MCF 10A (cell line): ENCODE measurements at regions of chr1 and their contacts with region 1.

Region 1: DNA sequence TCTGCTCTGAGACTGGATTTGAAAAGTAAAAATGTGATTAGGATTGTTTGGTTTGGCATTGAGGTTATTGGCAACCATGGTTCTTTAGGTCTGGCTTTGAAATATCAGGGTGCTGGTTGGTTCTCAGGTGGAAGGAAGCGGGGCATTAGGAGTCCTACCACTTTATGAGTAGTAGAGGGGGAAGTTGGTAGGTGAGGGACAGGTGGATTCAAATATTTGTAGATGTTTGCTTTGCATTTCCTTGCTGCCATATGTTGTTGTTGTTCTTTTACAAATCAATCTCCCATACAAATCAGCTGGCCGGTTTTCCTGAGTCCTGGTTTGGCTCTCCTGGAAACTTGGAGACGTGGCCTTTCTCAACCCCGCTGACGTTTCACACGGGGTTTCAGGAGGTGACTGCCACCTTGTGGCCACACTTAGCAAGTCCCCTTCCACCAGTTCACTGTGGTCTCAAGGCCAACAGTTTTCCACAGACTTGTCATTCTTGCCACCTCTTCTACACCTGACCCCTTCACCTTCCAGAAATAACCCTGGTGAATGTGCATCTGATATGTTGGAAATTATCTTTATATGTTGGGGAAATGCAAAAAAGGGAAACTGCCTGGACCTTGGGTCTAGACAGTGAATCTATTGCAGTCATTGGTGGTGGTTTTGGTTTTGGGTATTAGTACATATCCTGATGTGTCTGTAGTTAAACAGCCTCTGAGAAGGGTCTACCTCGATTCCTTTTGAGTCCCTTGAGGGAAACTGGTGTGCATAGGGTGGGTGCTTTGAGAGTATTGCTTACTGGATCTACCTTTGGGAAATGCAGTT is 127.0 kb upstream of the KIAA0040 start:
- DNase-seq: peak; percentile 85
- H3K4me3 Mint-ChIP-seq: no peak overlapping the region
- H3K27ac Mint-ChIP-seq: no peak overlapping the region
- H3K4me1 Mint-ChIP-seq: peaks cover 5% of the 10 kb centered on the region
- H3K27me3 Mint-ChIP-seq: no peaks in the 10 kb centered on the region
- CTCF ChIP-seq: peak; percentile 94

Region 2: GRCh38 chr1:175146529-175147213 is 173.0 kb before region 1 on chr1:
- CTCF ChIA-PET with region 1: interaction called, 723 read pairs
- POLR2A ChIA-PET with region 1: interaction called, 9 read pairs
- intact Hi-C with region 1: no loop called
- DNase-seq: peak; percentile 74
- H3K4me3 Mint-ChIP-seq: no peak overlapping the region
- H3K27ac Mint-ChIP-seq: no peak overlapping the region
- H3K4me1 Mint-ChIP-seq: peaks cover 12% of the 10 kb centered on the region
- H3K27me3 Mint-ChIP-seq: peaks cover 15% of the 10 kb centered on the region
- CTCF ChIP-seq: peak; percentile 88

Region 3: GRCh38 chr1:175174309-175175165 is 145.1 kb before region 1 on chr1:
- CTCF ChIA-PET with region 1: interaction called, 18 read pairs
- POLR2A ChIA-PET with region 1: interaction called, 3 read pairs
- intact Hi-C with region 1: no loop called
- DNase-seq: no peak
- H3K4me3 Mint-ChIP-seq: no peak overlapping the region
- H3K27ac Mint-ChIP-seq: peak overlapping the region; percentile 39
- H3K4me1 Mint-ChIP-seq: peaks cover 24% of the 10 kb centered on the region
- H3K27me3 Mint-ChIP-seq: no peaks in the 10 kb centered on the region
- CTCF ChIP-seq: no peak

Region 4: DNA sequence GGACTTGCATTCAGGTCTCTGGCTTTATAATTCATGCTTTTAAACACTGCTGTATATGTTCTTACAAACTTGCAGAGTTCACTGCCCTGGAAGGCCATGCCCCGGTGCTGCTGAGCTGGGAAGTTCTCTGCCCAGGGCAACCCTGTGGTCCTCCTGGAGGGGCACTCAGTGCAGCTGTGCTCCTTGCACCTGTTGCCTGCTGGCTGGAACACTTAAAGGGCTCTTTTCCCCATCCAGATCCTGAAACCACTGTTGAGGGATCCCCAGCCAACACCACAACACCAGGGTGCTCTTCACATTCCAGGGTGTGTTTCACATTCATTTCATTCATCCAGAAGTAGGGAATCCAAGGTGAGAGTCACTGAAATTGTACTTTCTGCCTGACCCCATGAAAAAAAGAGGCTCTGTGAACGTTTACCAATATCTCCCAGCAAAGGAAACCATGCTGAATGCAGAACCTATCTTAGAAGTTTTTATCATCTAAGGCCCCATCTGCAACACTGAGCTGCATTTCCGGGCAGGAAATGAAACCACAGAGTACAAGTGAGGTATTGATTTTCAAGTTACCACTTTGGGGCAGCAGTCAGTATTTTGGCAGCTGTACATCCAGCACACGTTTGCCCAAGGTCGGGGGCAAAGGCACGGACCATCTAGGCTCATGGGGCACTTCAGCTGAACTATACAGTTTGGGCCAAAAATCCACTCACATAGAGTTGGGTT is 110.7 kb before region 1 on chr1:
- CTCF ChIA-PET with region 1: interaction called, 10 read pairs
- POLR2A ChIA-PET with region 1: no interaction called
- intact Hi-C with region 1: no loop called
- DNase-seq: no peak
- H3K4me3 Mint-ChIP-seq: no peak overlapping the region
- H3K27ac Mint-ChIP-seq: no peak overlapping the region
- H3K4me1 Mint-ChIP-seq: peaks cover 14% of the 10 kb centered on the region
- H3K27me3 Mint-ChIP-seq: no peaks in the 10 kb centered on the region
- CTCF ChIP-seq: no peak

Region 5: GRCh38 chr1:175252561-175252960 is 67.1 kb before region 1 on chr1:
- CTCF ChIA-PET with region 1: interaction called, 11 read pairs
- POLR2A ChIA-PET with region 1: no interaction called
- intact Hi-C with region 1: no loop called
- DNase-seq: no peak
- H3K4me3 Mint-ChIP-seq: no peak overlapping the region
- H3K27ac Mint-ChIP-seq: no peak overlapping the region
- H3K4me1 Mint-ChIP-seq: no peaks in the 10 kb centered on the region
- H3K27me3 Mint-ChIP-seq: no peaks in the 10 kb centered on the region
- CTCF ChIP-seq: no peak

Region 6: GRCh38 chr1:175331891-175332290 is 12.3 kb after region 1 on chr1:
- CTCF ChIA-PET with region 1: interaction called, 54 read pairs
- POLR2A ChIA-PET with region 1: interaction called, 4 read pairs
- intact Hi-C with region 1: no loop called
- DNase-seq: no peak
- H3K4me3 Mint-ChIP-seq: no peak overlapping the region
- H3K27ac Mint-ChIP-seq: no peak overlapping the region
- H3K4me1 Mint-ChIP-seq: no peaks in the 10 kb centered on the region
- H3K27me3 Mint-ChIP-seq: peaks cover 34% of the 10 kb centered on the region
- CTCF ChIP-seq: no peak

Region 7: DNA sequence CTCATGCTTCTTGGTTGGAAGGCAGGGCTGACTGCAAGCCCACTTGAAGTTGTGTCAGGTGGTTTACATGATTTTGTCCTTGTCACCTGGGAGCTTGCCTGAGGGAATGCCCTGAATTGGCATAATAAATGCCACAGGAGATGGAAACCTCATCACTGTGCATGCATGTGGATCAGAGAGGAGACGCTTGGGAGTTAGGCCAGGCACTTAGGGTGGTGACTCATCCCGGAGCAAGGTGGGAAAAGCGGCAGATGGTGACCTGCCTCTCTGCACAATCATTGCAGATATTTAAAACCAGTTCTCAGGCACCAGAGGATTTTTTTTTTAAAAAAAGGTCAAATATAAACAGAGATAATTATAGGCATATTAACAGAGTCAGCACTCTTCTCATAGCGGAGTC is 75.1 kb after region 1 on chr1:
- CTCF ChIA-PET with region 1: no interaction called
- POLR2A ChIA-PET with region 1: no interaction called
- intact Hi-C with region 1: no loop called
- DNase-seq: peak; percentile 19
- H3K4me3 Mint-ChIP-seq: no peak overlapping the region
- H3K27ac Mint-ChIP-seq: no peak overlapping the region
- H3K4me1 Mint-ChIP-seq: no peaks in the 10 kb centered on the region
- H3K27me3 Mint-ChIP-seq: peaks cover 89% of the 10 kb centered on the region
- CTCF ChIP-seq: no peak